Activated CD4-positive, alpha-beta memory T cell treated with anti-CD3 and anti-CD28 coated beads for 36 hours (primary cell): ENCODE measurements at regions of chr16 and their contacts with region 1.

Region 1: GRCh38 chr16:70737377-70738082 is 51.7 kb upstream of the MTSS2 start:
- DNase-seq: peak; percentile 90
- H3K4me3 Mint-ChIP-seq: peak overlapping the region; percentile 40
- H3K27ac Mint-ChIP-seq: peak overlapping the region; percentile 92
- H3K4me1 Mint-ChIP-seq: peaks cover 50% of the 10 kb centered on the region
- H3K27me3 Mint-ChIP-seq: no peaks in the 10 kb centered on the region

Region 2: DNA sequence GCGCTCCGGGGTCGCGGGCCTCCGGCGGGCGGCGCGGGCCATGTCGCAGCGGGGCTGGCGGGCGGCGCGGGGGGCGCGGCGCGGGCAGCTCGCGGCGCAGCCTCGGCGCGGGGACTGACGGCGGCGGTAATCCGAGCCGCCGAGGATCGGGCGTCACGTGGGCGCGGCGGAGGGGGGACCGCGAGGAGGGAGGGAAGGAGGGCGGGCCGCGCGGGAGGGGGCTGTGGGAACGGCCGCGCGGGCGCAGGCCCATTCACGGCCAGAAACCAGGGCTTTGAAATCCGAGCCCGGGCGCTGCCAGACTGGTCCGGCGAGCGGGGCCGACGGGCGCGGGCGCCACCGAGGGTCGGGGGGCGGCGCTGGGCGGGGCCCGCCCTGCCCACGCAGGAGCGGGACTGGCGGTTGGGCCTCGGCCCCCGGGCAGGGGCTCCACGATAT is 51.6 kb before region 1 on chr16 and contains the start of gene MTSS2:
- CTCF ChIA-PET with region 1: no interaction called
- POLR2A ChIA-PET with region 1: interaction called, 4 read pairs
- intact Hi-C with region 1: loop called (anchors 10 kb)
- DNase-seq: peak; percentile 21
- H3K4me3 Mint-ChIP-seq: peak within 1 kb of the TSS; percentile 39
- H3K27ac Mint-ChIP-seq: no peak within 1 kb of the TSS
- H3K4me1 Mint-ChIP-seq: peaks cover 2% of the 10 kb centered on the region
- H3K27me3 Mint-ChIP-seq: peaks cover 21% of the 10 kb centered on the region
- total RNA-seq, gene MTSS2: 0.29 to 1.1 TPM

Region 3: GRCh38 chr16:70800781-70801530 is 63.4 kb after region 1 on chr16 and contains the start of gene VAC14:
- CTCF ChIA-PET with region 1: no interaction called
- POLR2A ChIA-PET with region 1: no interaction called
- intact Hi-C with region 1: loop called (anchors 2 kb)
- DNase-seq: peak; percentile 98
- H3K4me3 Mint-ChIP-seq: peak within 1 kb of the TSS; percentile 87
- H3K27ac Mint-ChIP-seq: peak within 1 kb of the TSS; percentile 60
- H3K4me1 Mint-ChIP-seq: peaks cover 30% of the 10 kb centered on the region
- H3K27me3 Mint-ChIP-seq: no peaks in the 10 kb centered on the region
- total RNA-seq, gene VAC14: 22.2 to 25.0 TPM